ENCODE measurements at regions of chr1 and their contacts with region 1.

Region 1: GRCh38 chr1:117758444-117759316 is 152.8 kb downstream of the TENT5C start:
- DNase-seq: peak; percentile 35 to 68 (median 61)
- ATAC-seq: peak; percentile 95
- H3K4me3 ChIP-seq: peak overlapping the region; percentile 59
- H3K4me3 Mint-ChIP-seq: peak overlapping the region; percentile 66 to 93 (median 84)
- H3K27ac ChIP-seq: no peak overlapping the region
- H3K27ac Mint-ChIP-seq: peak overlapping the region in 4 of 9 donors; percentile 3 to 47 (median 42)
- H3K4me1 ChIP-seq: peaks cover 0 to 3% of the 10 kb centered on the region in 2 donors
- H3K4me1 Mint-ChIP-seq: peaks cover 0 to 16% (median 6%) of the 10 kb centered on the region in 7 donors
- H3K27me3 ChIP-seq: no peaks in the 10 kb centered on the region
- H3K27me3 Mint-ChIP-seq: peaks cover 0 to 43% (median 5%) of the 10 kb centered on the region in 5 donors

Region 2: GRCh38 chr1:117121776-117122697 is 636.6 kb before region 1 on chr1:
- CTCF ChIA-PET with region 1: interaction called, 4 read pairs
- POLR2A ChIA-PET with region 1: no interaction called
- intact Hi-C with region 1: loop called (anchors 1 to 5 kb)
- DNase-seq: peak; percentile 64 to 81 (median 74)
- ATAC-seq: peak; percentile 90
- H3K4me3 ChIP-seq: peak overlapping the region; percentile 97
- H3K4me3 Mint-ChIP-seq: peak overlapping the region; percentile 83 to 90 (median 87)
- H3K27ac ChIP-seq: peak overlapping the region; percentile 61
- H3K27ac Mint-ChIP-seq: peak overlapping the region in 2 of 9 donors; percentile 16 to 53
- H3K4me1 ChIP-seq: peaks cover 0 to 4% of the 10 kb centered on the region in 2 donors
- H3K4me1 Mint-ChIP-seq: peaks cover 0 to 13% (median 4%) of the 10 kb centered on the region in 7 donors
- H3K27me3 ChIP-seq: no peaks in the 10 kb centered on the region
- H3K27me3 Mint-ChIP-seq: peaks cover 5 to 21% (median 6%) of the 10 kb centered on the region in 5 donors

Region 3: DNA sequence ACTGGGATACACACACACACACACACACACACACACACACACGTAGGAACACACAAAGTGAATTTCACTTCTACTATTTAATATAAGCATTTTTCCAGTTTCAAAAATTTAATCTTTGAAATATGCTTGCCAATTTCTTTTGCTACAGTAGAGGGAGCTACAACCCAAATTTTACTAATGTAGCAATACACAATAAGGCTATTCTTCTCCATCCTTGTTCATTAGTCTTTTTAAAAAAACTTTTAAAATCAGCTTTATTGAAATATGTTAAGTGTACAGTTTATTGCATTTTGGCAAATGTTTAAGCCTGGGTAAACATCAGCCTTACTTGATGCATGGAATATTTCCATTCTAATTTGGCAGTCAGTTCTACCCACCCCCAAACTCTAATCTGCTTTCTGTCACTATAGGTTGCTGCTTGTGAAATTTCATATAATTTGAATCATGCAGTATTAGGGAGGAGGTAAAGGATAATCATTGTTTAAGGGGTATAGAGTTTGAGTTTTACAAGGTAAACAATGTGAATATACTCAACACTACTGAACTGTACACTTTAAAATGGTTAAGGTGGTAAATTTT is 245.8 kb before region 1 on chr1:
- CTCF ChIA-PET with region 1: interaction called, 104 read pairs
- POLR2A ChIA-PET with region 1: no interaction called
- intact Hi-C with region 1: loop called (anchors 1 kb)
- DNase-seq: peak in 5 of 9 donors; percentile 22 to 34 (median 25)
- ATAC-seq: peak; percentile 57
- H3K4me3 ChIP-seq: no peak overlapping the region
- H3K4me3 Mint-ChIP-seq: no peak overlapping the region
- H3K27ac ChIP-seq: no peak overlapping the region
- H3K27ac Mint-ChIP-seq: no peak overlapping the region
- H3K4me1 ChIP-seq: no peaks in the 10 kb centered on the region
- H3K4me1 Mint-ChIP-seq: peaks cover 0 to 3% (median 0%) of the 10 kb centered on the region in 7 donors
- H3K27me3 ChIP-seq: no peaks in the 10 kb centered on the region
- H3K27me3 Mint-ChIP-seq: no peaks in the 10 kb centered on the region

Region 4: GRCh38 chr1:117534995-117535467 is 223.6 kb before region 1 on chr1:
- CTCF ChIA-PET with region 1: interaction called, 130 read pairs
- POLR2A ChIA-PET with region 1: no interaction called
- intact Hi-C with region 1: loop called (anchors 1 kb)
- DNase-seq: peak; percentile 22 to 74 (median 60)
- ATAC-seq: peak; percentile 88
- H3K4me3 ChIP-seq: no peak overlapping the region
- H3K4me3 Mint-ChIP-seq: peak overlapping the region in 1 of 10 donors; percentile 17
- H3K27ac ChIP-seq: no peak overlapping the region
- H3K27ac Mint-ChIP-seq: peak overlapping the region in 4 of 9 donors; percentile 1 to 36 (median 14)
- H3K4me1 ChIP-seq: peaks cover 7 to 8% of the 10 kb centered on the region in 2 donors
- H3K4me1 Mint-ChIP-seq: peaks cover 0 to 9% (median 3%) of the 10 kb centered on the region in 7 donors
- H3K27me3 ChIP-seq: no peaks in the 10 kb centered on the region
- H3K27me3 Mint-ChIP-seq: no peaks in the 10 kb centered on the region

Region 5: GRCh38 chr1:117710710-117711109 is 48.0 kb before region 1 on chr1:
- CTCF ChIA-PET with region 1: interaction called, 4 read pairs
- POLR2A ChIA-PET with region 1: no interaction called
- intact Hi-C with region 1: loop called in 1 of 2 experiments (anchors 5 kb)
- DNase-seq: no peak
- ATAC-seq: no peak
- H3K4me3 ChIP-seq: no peak overlapping the region
- H3K4me3 Mint-ChIP-seq: no peak overlapping the region
- H3K27ac ChIP-seq: no peak overlapping the region
- H3K27ac Mint-ChIP-seq: no peak overlapping the region
- H3K4me1 ChIP-seq: no peaks in the 10 kb centered on the region
- H3K4me1 Mint-ChIP-seq: no peaks in the 10 kb centered on the region
- H3K27me3 ChIP-seq: no peaks in the 10 kb centered on the region
- H3K27me3 Mint-ChIP-seq: peaks cover 11 to 35% (median 26%) of the 10 kb centered on the region in 5 donors